Heart left ventricle (tissue), 16 donors: ENCODE measurements at regions of chr2 and their contacts with region 1.

Region 1: DNA sequence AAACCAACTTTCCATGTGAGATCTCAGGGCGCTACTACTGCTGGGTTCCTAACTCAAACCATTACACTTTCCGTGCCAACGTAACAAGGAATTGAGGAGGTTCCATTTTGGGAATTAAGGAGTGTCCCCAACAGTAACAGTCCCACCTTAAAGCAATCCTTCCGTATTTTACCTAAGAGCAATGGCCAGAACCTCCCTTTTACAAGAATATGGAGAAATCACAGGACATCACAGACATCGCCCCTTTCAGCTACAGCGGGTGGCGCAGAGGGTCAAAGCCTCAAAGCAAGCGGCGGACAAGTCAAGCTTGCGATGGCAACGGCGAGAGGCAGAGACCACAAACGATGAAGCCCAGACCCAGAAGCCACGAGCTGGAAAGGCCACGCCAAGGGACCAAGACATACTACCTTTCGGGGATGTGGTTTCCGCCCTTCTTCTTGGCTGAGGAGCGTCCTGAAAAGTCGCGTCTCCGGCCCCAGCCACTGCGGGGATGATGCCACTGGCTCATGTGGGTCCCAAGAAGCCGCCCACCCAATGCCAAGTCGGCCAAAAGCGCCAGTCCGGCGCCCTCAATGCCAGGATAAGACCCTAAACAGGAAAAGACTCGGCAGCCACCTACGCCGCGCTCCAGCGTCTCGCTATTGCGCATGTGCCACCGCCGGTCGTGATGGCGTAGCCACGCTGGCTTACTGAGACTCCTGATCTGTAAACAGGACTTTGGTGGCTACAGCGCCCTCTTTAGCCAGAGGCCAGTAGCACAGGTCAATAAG is at the start of gene DUSP11:
- DNase-seq: peak; percentile 91 to 97 (median 95)
- ATAC-seq: peak; percentile 96 to 100 (median 100)
- H3K4me3 ChIP-seq: peak within 1 kb of the TSS; percentile 63 to 94 (median 84)
- H3K27ac ChIP-seq: peak within 1 kb of the TSS; percentile 75 to 96 (median 91)
- H3K4me1 ChIP-seq: peaks cover 0 to 30% (median 13%) of the 10 kb centered on the region in 12 donors
- H3K27me3 ChIP-seq: no peaks in the 10 kb centered on the region
- CTCF ChIP-seq: peak; percentile 87 to 99 (median 93)
- POLR2A ChIP-seq: peak in 1 of 2 donors; percentile 85
- total RNA-seq, gene DUSP11: 6.7 to 13.8 (median 11.0) TPM

Region 2: DNA sequence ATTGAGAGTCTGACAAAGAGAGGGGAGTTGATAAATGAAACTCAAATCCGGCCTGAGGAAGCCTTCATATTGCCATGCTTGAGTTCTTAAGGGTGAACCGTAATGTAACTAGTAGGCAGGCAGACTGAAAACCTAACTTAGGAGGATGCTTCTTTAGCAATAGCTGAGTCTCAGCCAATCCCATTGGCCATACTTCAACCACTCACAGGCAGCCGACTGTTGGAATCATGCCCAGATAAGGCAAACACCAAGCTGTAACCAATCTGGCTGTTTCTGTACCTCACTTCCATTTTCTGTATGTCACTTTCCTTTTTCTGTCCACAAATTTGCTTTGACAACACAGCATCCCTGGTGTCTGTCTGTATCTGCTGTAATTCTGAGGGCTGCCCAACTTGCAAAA is 82.0 kb before region 1 on chr2:
- intact Hi-C with region 1: loop called in 3 of 10 experiments (anchors 10 kb)
- DNase-seq: no peak
- ATAC-seq: no peak
- H3K4me3 ChIP-seq: no peak overlapping the region
- H3K27ac ChIP-seq: no peak overlapping the region
- H3K4me1 ChIP-seq: peaks cover 0 to 16% (median 0%) of the 10 kb centered on the region in 12 donors
- H3K27me3 ChIP-seq: no peaks in the 10 kb centered on the region
- CTCF ChIP-seq: no peak
- POLR2A ChIP-seq: no peak